Gastrocnemius medialis (tissue), 4 donors: ENCODE measurements at regions of chr12 and their contacts with region 1.

Region 1: DNA sequence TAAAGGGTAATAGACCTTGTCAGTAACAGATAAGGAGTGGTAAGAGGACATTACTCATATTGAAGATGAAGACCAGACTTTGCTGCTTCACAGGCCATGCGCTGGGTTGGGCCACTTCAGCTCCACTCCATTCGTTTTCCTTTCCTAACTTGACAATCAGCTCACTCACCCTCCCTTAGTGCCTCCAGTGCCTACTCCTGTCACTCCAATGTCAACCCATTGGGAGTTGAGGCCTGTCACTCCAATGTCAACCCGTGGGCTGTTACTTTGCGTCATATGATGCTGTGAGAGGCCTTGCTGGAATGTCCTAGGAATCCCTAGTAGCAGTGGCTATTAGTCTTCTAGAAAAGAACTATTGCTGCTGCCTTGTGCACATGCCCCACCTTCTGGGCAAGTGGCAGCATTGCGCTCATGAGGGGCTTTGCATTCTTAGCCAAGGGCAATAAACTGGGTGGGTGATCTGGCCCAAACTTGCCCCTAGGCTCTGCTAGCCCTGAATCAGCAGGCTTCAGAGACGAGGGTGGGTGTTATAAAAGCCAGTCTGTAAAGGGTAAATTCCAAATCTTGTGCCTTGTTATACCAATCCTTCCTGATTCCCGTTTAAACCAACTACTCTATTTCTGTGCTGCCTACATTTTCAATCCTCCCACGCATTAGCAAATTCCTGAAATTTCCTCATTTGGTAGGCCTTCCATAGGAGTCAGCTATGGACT is 36.1 kb downstream of the BAZ2A start:
- DNase-seq: peak in 1 of 2 donors; percentile 26
- ATAC-seq: peak; percentile 17 to 52
- H3K4me3 ChIP-seq: no peak overlapping the region
- H3K27ac ChIP-seq: peak overlapping the region in 3 of 4 donors; percentile 6 to 30 (median 16)
- H3K4me1 ChIP-seq: no peaks in the 10 kb centered on the region
- H3K27me3 ChIP-seq: no peaks in the 10 kb centered on the region
- CTCF ChIP-seq: peak; percentile 42 to 71 (median 61)
- POLR2A ChIP-seq: no peak

Region 2: DNA sequence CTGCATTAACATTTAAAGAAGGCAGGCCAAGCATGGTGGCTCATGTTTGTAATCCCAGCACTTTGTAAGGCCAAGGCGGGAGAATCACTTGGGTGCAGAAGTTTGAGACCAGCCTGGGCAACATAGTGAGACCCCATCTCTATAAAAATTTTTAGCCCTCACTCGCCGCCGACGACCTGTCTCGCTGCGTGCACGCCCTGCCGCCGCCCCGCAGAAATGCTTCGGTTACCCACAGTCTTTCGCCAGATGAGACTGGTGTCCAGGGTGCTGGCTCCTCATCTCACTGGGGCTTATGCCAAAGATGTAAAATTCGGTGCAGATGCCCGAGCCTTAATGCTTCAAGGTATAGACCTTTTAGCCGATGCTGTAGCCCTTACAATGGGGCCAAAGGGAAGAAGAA is 83.3 kb before region 1 on chr12:
- in situ Hi-C with region 1: no loop called
- intact Hi-C with region 1: loop called (anchors 5 kb)
- DNase-seq: no peak
- ATAC-seq: no peak
- H3K4me3 ChIP-seq: no peak overlapping the region
- H3K27ac ChIP-seq: no peak overlapping the region
- H3K4me1 ChIP-seq: no peaks in the 10 kb centered on the region
- H3K27me3 ChIP-seq: no peaks in the 10 kb centered on the region
- CTCF ChIP-seq: no peak
- POLR2A ChIP-seq: no peak